ENCODE measurements at regions of chr17 and their contacts with region 1.

Region 1: DNA sequence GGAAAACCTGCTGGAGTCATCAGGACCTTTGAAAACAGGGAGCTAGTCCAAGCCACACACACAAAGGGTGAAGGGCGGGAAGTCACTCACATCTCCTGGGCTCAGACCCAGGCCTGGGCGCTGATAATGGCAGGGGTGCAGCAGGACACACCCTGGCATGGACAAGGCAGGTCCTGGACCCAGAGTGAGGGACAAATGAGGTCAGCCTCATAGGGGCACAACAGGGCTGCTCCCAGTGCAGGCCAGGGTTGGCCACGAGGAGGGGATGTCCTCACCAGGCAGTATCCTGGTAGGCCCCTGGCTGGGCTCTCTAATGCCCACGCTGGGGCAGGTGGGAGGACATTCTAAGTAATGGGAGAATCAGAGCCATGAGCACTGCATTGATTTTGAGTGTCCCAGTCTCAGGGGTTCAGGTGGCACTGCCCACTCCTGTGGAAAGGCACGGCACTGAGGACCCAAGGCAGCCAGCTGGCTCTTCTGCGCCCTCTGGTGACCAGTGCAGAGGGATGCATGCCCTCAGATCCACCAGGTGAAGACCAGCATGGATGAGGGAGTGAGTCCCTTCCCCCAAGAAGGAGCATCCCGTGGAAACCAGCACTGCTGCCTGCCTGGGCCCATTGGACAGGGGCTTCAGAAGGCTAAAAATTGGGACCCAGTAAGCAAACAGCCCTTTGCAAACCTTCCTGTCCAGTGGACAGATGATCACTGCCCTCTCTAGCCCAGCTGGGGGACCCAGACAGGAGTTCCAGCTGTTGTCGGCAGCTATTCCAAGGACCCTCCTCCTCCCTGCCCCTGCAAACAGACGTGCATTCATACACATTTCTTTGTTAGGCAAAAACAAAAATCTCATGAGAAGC is 23.4 kb upstream of the SREBF1 start:
- DNase-seq: peak; percentile 65
- ATAC-seq: peak; percentile 99
- H3K4me3 Mint-ChIP-seq: no peak overlapping the region
- H3K27ac Mint-ChIP-seq: no peak overlapping the region
- H3K4me1 Mint-ChIP-seq: no peaks in the 10 kb centered on the region
- H3K27me3 Mint-ChIP-seq: no peaks in the 10 kb centered on the region
- CTCF ChIP-seq: peak; percentile 84

Region 2: DNA sequence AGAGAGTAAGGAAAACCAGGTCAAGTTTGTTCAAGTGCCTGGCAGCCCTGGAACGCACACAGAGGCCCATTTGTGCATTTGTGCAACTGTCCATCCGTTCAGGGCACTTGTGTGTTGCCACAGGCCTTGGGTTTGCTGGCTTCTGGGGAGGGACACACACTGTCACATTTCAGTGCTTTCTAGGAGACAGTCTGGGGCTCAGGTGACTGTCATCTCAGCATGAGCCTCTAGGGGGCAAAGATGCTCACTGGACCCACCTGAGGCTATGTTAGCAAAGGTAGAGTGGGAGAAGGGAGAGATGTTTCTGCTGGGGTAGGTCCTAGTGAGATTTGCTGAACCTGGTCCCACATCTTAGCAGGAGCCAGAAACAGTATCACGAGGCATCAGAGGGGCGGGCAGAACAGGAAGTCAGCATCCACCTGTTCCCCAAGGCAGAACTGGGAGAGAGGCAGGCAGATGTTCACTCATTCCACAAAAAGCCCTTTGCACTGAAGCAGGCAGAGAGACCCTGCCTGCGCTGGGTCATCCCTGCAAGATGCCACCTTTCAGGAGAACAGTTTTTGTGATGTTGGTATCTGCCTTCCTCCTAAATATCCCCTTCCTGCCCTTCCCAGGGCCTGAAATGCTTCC is 130.4 kb before region 1 on chr17:
- CTCF ChIA-PET with region 1: no interaction called
- POLR2A ChIA-PET with region 1: no interaction called
- intact Hi-C with region 1: loop called (anchors 2 kb)
- DNase-seq: no peak
- ATAC-seq: peak; percentile 93
- H3K4me3 Mint-ChIP-seq: no peak overlapping the region
- H3K27ac Mint-ChIP-seq: no peak overlapping the region
- H3K4me1 Mint-ChIP-seq: peaks cover 16% of the 10 kb centered on the region
- H3K27me3 Mint-ChIP-seq: no peaks in the 10 kb centered on the region
- CTCF ChIP-seq: no peak

Region 3: DNA sequence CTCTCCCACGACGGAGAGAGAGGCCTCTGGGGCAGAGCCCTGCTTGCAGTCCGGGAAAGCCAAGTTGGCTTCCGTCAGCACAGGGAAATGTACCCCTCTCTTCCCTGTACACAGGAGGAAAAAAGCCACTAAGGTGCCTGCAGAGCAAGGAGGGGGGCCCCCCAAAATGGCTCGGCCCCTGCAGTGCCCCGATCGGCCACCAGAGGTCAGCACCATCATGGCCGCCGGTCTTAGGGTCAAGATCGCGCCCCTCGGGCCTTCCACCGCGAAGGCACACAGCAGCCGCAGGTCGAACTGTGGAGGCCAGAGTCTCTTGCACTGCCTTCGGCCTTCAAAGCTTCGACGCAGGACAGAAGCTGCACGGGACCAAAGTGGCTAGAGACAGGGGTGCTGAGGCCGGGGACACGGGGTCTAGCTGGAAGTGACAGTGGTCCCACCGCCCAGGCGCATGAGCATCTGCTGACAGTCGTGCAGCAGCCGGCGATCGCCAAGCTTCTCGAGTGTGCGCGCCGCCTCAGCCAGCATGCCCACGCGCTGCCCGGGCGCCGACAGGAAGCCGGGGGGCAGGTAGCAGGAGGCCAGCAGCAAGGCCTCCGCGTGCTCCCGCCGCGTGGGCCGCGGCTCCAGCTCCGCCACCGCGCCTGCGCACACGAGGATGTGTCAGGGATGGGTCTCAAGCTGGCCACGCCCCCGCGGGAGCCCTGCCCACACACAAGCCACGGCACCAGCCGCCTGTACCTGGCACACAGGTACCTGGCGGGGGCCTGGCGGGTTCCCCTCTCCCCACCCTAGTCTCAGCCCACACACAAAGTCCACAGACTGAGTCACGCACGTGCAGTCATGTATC is 47.7 kb before region 1 on chr17:
- CTCF ChIA-PET with region 1: interaction called, 76 read pairs
- POLR2A ChIA-PET with region 1: interaction called, 4 read pairs
- intact Hi-C with region 1: loop called (anchors 1 kb)
- DNase-seq: peak; percentile 81
- ATAC-seq: peak; percentile 82
- H3K4me3 Mint-ChIP-seq: no peak overlapping the region
- H3K27ac Mint-ChIP-seq: no peak overlapping the region
- H3K4me1 Mint-ChIP-seq: peaks cover 11% of the 10 kb centered on the region
- H3K27me3 Mint-ChIP-seq: no peaks in the 10 kb centered on the region
- CTCF ChIP-seq: peak; percentile 70

Region 4: DNA sequence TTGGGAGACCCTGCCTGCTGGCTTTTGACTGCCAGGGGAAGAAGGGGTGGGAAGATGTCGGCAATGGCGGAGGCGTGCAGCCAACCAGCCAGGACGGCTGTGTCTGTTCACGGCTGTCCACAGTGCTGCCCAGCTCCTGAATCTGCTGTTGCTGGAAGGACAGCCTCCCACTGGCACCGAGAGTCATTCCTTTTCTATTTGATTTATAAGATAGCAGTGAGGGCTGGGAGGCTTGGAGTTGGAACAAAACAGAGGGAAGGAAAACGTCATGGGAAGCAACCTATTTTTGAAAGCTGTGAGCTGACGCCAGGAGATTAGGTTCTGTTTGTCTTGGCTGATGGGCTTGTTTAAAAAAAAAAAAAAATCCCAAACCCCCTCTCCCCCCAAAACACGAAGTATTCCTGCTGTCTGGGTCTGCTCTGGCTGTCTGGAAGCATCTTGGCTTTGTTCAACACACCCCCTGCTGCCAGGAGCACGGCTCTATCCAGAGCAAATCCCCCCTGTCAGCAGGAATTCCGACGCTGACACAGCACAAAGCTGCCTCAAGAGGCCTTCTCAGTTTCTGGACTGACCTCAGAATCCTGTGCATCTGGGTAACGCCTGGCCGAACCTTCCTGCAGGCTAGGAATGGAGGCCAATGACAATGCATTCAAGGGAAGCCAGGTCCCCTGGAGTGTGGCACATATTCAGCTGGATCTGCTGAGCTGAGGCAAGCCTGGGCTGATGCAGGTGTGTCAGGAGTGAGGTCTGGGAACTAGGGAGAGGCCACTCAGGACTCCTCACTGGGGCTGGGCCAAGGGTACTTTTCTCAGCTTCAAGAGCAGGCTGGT is 17.6 kb after region 1 on chr17:
- CTCF ChIA-PET with region 1: no interaction called
- POLR2A ChIA-PET with region 1: no interaction called
- intact Hi-C with region 1: no loop called
- DNase-seq: no peak
- ATAC-seq: no peak
- H3K4me3 Mint-ChIP-seq: no peak overlapping the region
- H3K27ac Mint-ChIP-seq: no peak overlapping the region
- H3K4me1 Mint-ChIP-seq: no peaks in the 10 kb centered on the region
- H3K27me3 Mint-ChIP-seq: no peaks in the 10 kb centered on the region
- CTCF ChIP-seq: no peak

Region 5: GRCh38 chr17:17919169-17920107 is 59.3 kb after region 1 on chr17:
- CTCF ChIA-PET with region 1: interaction called, 10 read pairs
- POLR2A ChIA-PET with region 1: no interaction called
- intact Hi-C with region 1: loop called (anchors 1 kb)
- DNase-seq: peak; percentile 29
- ATAC-seq: peak; percentile 84
- H3K4me3 Mint-ChIP-seq: no peak overlapping the region
- H3K27ac Mint-ChIP-seq: no peak overlapping the region
- H3K4me1 Mint-ChIP-seq: no peaks in the 10 kb centered on the region
- H3K27me3 Mint-ChIP-seq: no peaks in the 10 kb centered on the region
- CTCF ChIP-seq: no peak

Region 6: GRCh38 chr17:18064053-18064452 is 203.9 kb after region 1 on chr17:
- CTCF ChIA-PET with region 1: no interaction called
- POLR2A ChIA-PET with region 1: no interaction called
- intact Hi-C with region 1: no loop called
- DNase-seq: no peak
- ATAC-seq: no peak
- H3K4me3 Mint-ChIP-seq: no peak overlapping the region
- H3K27ac Mint-ChIP-seq: no peak overlapping the region
- H3K4me1 Mint-ChIP-seq: no peaks in the 10 kb centered on the region
- H3K27me3 Mint-ChIP-seq: no peaks in the 10 kb centered on the region
- CTCF ChIP-seq: no peak